AG04449 (cell line): ENCODE measurements at regions of chr5 and their contacts with region 1.

Region 1: DNA sequence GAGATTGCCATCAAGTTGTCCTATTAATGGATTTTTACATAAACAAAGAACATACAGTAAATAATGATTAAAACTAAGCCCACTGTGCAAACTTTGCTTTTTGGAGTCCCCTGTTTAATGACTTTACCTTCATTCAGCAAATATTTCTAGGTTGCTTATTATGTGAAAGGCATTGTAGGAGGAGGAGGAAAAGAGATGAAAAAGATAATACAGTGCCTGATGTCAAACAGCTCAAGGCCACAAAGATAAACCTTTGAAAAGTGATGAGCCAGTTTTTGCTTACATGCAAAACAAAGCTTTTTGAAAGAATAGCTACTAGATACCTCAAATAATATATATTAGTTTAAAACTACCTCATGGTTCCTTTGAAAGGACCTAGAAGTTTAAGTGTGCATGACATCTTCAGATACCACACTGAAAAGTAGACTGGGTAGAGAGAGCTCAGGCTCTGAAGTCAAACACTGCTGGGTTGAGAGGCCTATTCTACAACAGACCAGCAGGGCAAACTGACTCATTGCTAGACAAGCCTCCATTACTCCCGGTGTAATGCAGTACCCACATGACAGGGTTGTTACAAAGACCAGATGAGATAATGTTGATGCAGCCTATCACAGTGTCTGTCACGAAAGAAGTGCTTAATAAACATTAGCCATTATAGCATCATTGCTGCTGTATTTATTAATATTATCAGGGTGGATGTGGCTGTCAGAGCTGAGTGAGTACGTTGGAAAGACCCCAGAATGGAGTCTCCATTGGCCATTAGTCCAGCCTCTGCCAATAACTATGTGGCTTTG is 11.8 kb downstream of the DEPDC1B start:
- DNase-seq: no peak
- H3K4me3 ChIP-seq: no peak overlapping the region
- CTCF ChIP-seq: peak; percentile 37

Region 2: DNA sequence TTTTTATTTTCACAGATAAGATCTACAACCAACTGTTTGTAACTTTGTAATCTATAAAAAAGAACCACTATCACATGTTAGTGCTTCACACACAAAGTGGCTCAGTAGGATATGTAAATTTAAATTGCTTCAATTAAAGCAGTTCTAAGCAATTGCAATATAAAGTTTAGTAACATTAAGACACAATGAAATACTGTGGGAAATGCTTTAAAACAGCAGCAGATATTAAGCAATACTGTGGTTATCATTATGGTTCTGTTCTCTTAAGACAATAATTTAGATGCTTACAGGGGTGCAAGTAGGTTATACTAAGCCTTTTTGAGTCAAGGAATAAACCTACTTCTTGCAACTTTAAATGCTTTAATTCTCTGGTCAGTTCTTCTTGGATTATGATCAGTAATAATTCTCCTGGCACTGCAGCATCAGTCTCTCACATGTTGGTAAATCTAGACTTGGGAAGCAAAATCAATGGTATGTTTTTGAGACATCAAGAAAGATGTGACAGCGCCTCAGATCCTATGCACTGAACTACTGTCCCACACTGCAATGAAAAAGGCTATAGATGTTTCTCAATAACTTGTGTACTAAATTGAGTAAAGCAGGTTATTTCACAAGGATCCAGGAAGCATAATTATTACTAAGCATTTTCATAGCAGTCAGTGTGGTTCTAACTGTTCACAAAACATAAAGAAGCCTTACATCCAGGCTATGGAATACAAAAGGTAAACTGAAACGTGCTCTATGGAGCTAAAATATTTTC is 455.9 kb before region 1 on chr5:
- CTCF ChIA-PET with region 1: no interaction called
- POLR2A ChIA-PET with region 1: no interaction called
- DNase-seq: no peak
- H3K4me3 ChIP-seq: no peak overlapping the region
- CTCF ChIP-seq: no peak

Region 3: GRCh38 chr5:60649283-60649917 is 38.7 kb before region 1 on chr5:
- CTCF ChIA-PET with region 1: interaction called, 11 read pairs
- POLR2A ChIA-PET with region 1: no interaction called
- DNase-seq: no peak
- H3K4me3 ChIP-seq: no peak overlapping the region
- CTCF ChIP-seq: peak; percentile 48

Region 4: DNA sequence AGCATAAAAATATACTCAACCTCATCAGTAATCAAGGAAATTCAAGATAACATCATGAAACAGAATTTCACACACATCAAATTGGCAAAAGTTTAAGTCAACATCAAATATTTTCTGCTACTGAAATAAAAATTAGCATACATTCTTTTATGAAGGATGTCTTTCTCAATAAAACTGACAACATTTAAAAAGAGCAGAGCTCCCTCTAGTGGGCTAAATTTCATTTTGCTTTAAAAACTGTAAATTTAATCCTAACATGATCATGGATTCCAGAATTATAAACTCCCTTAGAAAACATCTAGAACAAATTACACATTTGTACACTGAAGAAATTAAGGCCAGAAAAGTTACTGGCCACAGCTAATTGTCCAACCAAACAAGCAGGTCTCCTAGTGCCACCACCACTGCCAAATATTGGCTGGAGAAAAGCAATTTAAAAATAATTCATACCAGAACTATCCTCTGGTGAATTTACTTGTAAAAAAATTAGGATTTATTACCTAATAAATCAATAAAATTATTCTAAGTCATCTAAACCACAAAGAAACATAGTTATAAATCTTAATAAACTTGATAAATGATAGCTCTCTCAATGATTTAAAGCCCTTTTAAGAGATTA is 19.3 kb before region 1 on chr5:
- CTCF ChIA-PET with region 1: interaction called, 48 read pairs
- POLR2A ChIA-PET with region 1: no interaction called
- DNase-seq: no peak
- H3K4me3 ChIP-seq: no peak overlapping the region
- CTCF ChIP-seq: no peak

Region 5: GRCh38 chr5:60677844-60678664 is 10.1 kb before region 1 on chr5:
- CTCF ChIA-PET with region 1: interaction called, 36 read pairs
- POLR2A ChIA-PET with region 1: no interaction called
- DNase-seq: no peak
- H3K4me3 ChIP-seq: no peak overlapping the region
- CTCF ChIP-seq: peak; percentile 21

Region 6: DNA sequence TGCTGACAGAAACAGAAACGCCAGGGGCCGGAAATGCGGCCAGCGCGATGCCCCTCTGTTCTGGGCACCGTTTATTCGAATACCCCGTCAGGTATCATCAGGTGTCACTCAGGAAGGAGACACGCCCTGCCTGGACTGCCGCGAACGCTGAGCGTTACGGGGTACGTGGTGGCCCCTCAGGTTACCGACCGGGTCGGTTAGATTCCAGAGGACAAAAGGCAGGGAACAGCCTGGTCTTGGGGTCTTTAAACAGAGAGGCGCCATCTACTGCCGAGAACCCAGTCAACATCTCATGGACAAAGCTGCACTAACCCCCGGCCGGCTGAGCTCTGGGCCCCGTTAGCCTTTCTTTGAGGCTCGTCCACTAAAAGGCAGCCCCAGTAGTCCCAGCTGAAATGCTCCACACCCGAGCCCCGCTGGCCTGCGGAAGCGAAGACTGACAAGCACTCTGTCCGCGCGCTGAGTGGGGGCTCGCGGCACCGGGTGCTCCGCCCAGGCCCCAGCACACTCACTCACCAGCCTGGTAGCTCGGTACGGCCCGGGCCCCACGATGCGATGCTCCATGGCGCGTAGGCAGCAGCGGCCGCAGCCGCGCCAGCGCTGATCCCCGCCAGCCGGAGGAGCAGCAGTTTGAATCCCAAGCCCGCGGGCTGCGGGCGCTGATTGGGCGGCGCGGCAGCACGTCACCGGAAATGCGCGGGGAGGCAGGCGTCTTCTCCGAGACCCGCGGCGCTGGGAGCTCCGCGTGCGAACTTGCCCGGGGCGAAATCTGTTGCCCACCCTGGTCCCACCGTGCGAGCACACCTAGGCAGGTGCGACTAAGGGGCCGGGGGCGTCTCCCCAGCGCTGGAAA is 11.6 kb after region 1 on chr5 and contains the start of gene DEPDC1B:
- CTCF ChIA-PET with region 1: interaction called, 71 read pairs
- POLR2A ChIA-PET with region 1: no interaction called
- DNase-seq: peak; percentile 31
- H3K4me3 ChIP-seq: peak within 1 kb of the TSS; percentile 92
- CTCF ChIP-seq: peak; percentile 45